H1 (cell line): ENCODE measurements at regions of chr10 and their contacts with region 1.

Region 1: DNA sequence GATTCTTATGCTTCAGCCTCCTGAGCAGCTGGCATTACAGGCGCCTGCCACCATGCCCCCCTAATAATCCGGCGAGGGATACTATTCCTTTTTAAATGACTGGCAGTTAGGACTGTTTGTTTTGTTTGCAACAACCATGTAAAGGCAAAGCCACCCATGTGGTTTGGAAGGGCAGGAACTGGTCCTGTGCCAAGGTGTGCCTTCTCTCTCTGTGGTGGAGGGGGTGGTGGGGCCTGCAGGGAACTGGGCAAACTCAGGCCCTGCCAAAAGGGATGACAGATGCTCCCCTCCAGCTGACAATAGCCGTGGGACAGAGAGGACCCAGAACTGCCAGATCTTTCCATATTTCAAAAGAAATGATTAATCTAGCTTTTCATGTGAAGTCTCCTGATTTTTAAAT is 23.5 kb upstream of the WAPL start:
- DNase-seq: no peak
- H3K4me3 ChIP-seq: no peak overlapping the region
- H3K27ac ChIP-seq: no peak overlapping the region
- H3K4me1 ChIP-seq: no peaks in the 10 kb centered on the region
- H3K27me3 ChIP-seq: no peaks in the 10 kb centered on the region
- CTCF ChIP-seq: no peak
- EP300 ChIP-seq: no peak
- POLR2A ChIP-seq: no peak
- RAD21 ChIP-seq: no peak

Region 2: GRCh38 chr10:86376852-86377796 is 168.0 kb before region 1 on chr10:
- CTCF ChIA-PET with region 1: no interaction called
- POLR2A ChIA-PET with region 1: no interaction called
- DNase-seq: peak in 1 of 2 experiments; percentile 100
- H3K4me3 ChIP-seq: peak overlapping the region in 3 of 4 experiments; percentile 11 to 51 (median 20); a peak in 4 of 8 replicates
- H3K27ac ChIP-seq: no peak overlapping the region
- H3K4me1 ChIP-seq: peaks cover 0 to 3% (median 0%) of the 10 kb centered on the region in 4 experiments; a peak in 1 of 7 replicates
- H3K27me3 ChIP-seq: peaks cover 7 to 26% (median 14%) of the 10 kb centered on the region in 4 experiments
- CTCF ChIP-seq: peak; percentile 90 to 98 (median 96)
- EP300 ChIP-seq: no peak
- POLR2A ChIP-seq: no peak
- RAD21 ChIP-seq: peak; percentile 96 to 98

Region 3: DNA sequence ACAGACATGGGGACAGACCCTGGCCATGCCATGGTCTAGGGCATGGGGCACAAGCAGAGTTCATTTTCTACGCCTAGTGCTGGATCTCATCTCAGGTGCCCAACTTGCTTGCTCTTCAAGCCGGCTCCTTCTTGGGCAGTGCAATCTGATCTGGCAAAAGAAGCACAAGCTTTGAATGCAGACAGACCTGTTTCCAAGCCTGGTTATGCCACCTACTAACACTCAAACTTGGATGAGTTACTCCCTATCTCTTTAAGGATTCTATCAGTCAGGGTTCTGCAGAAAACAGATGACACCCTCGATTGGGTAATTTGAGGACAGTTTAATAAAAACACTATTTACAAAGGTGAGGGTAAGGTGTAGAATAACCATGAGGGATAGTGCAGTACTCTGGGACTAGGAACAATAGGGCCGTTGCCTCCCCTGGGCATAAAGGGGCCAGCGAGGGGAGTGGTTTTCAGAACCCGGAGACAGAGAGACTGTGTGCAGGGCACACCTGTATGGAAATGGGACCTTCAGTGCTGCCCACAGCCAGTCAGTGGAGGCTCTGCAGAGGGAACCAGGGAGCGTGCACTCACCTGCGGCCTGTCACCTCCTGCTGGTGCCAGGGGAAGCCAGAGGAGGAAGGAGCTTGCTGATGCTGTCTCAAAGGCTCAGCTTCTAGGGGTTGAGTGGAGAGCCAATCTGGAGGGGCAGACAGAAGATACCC is 11.6 kb after region 1 on chr10:
- CTCF ChIA-PET with region 1: interaction called, 10 read pairs
- POLR2A ChIA-PET with region 1: no interaction called
- DNase-seq: no peak
- H3K4me3 ChIP-seq: no peak overlapping the region
- H3K27ac ChIP-seq: no peak overlapping the region
- H3K4me1 ChIP-seq: peaks cover 0 to 6% (median 4%) of the 10 kb centered on the region in 4 experiments; a peak in 5 of 7 replicates
- H3K27me3 ChIP-seq: no peaks in the 10 kb centered on the region
- CTCF ChIP-seq: no peak
- EP300 ChIP-seq: no peak
- POLR2A ChIP-seq: no peak
- RAD21 ChIP-seq: no peak